Activated CD4-positive, alpha-beta T cell treated with anti-CD3 and anti-CD28 coated beads for 36 hours (primary cell): ENCODE measurements at regions of chr1 and their contacts with region 1.

Region 1: DNA sequence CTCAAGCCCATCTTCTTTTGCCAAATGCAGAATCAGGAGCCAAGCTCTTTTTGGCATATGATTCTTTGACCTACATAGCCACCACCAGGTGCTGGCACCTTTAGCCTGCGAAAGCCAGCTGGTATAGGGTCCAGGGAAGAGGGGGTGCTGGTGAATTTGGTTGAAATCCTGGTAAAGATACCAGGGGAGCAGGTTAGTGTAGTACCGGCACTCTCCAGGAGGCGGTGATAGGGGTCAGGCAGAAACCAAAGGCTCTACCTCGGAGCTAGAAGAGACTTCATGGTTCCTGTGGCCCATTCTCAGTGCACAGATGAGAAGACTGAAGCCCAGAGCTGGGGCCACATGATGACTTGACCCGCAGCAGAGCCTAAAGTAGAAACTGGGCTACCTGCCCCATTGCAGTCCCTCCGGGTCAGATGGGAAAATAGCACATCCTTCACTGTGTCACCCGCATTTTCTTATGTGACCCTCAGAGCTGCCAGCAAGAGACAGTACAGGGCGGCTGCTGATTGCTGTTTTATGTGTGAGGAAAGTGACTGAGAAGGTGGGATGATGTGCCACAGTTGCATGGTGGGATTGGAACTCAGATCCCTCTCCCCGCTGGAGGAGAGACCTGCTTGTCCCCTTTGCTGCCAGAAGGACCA is 36.0 kb upstream of the IL19 start:
- DNase-seq: peak; percentile 89
- ATAC-seq: peak; percentile 52
- H3K4me3 Mint-ChIP-seq: no peak overlapping the region
- H3K27ac Mint-ChIP-seq: no peak overlapping the region
- H3K4me1 Mint-ChIP-seq: peaks cover 55% of the 10 kb centered on the region
- H3K27me3 Mint-ChIP-seq: no peaks in the 10 kb centered on the region

Region 2: DNA sequence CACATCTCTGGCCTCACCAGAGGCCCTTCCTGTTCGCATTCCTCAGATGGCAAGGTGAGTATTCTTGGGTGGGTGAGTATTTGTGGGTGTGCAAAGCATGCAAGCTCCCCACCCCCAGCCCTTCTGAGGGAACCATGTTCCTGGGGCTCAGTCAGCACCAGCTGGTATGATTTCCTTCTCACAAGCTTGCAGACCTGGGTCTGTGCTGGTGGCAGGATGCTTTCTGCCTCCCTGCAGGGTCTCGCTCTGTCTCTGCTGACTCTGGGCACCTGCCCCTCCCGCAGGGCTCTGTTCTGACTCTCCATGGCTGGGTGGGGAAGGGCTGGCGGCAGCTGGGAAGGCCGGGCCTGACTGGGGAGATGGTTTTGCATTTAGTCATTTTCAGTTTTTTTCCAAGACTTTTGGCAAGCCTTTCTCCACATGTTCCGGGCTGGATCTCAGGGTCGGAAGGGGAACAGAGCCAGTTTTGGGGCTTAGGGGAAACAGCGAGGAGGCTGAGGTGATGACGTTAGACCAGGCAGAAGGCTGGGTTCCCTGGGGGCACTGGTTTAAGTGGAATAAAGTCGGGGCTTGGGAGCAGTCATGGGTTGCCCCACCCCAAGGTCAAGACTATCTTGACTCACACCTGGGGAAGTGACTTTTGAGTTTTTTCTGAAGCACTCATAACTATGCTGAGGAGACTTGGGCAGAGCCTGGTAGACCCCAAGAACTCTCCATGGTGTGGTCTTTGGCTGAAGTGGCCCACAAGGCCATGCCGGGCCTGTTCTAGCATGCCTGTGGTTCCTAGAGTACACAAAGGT is 221.1 kb before region 1 on chr1:
- CTCF ChIA-PET with region 1: no interaction called
- POLR2A ChIA-PET with region 1: no interaction called
- intact Hi-C with region 1: no loop called
- DNase-seq: no peak
- ATAC-seq: no peak
- H3K4me3 Mint-ChIP-seq: no peak overlapping the region
- H3K27ac Mint-ChIP-seq: no peak overlapping the region
- H3K4me1 Mint-ChIP-seq: peaks cover 6% of the 10 kb centered on the region
- H3K27me3 Mint-ChIP-seq: peaks cover 21% of the 10 kb centered on the region

Region 3: GRCh38 chr1:206761159-206761768 is 26.6 kb after region 1 on chr1:
- CTCF ChIA-PET with region 1: interaction called, 35 read pairs
- POLR2A ChIA-PET with region 1: no interaction called
- intact Hi-C with region 1: loop called (anchors 2 kb)
- DNase-seq: no peak
- ATAC-seq: no peak
- H3K4me3 Mint-ChIP-seq: no peak overlapping the region
- H3K27ac Mint-ChIP-seq: no peak overlapping the region
- H3K4me1 Mint-ChIP-seq: peaks cover 21% of the 10 kb centered on the region
- H3K27me3 Mint-ChIP-seq: peaks cover 3% of the 10 kb centered on the region

Region 4: DNA sequence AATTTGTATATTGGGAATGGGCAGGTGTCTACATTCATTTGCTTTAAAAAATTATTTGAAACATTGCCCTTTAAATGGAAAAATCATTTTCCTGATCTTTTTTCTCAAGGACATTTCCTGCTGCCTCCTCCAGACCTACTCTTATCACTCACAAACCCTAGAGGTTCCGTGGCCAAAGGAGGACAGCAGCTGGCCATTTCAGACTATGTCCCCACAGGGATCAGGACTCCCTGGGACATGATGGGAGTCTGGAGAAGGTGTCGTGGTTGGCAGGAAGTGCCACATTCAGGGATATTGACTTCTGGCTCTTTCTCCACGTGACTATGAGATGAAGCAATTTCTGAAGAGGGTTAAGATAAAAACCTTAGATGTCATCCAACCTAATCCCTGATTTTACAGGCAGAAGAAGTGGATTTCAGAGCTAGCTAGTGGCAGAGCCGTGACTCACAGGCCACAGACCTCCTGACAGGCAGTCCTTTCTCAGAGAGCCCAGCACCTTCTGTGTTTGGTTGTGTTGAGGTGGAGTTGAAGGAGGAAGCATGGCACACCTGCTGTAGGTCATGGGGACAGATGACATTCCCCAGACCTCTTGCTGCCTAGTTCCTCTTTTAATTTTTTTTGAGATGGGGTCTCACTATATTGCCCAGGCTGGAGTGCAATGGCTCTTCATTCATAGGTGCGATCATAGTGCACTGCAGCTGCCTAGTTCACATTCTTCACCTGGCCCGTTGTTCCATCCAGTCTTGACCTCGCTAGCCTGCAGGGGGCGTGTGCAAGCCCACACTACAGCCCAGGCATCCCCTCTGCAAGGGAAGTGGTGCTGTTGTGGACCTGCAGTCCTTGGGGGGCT is 63.1 kb after region 1 on chr1:
- CTCF ChIA-PET with region 1: interaction called, 198 read pairs
- POLR2A ChIA-PET with region 1: no interaction called
- intact Hi-C with region 1: no loop called
- DNase-seq: peak; percentile 50
- ATAC-seq: peak; percentile 20
- H3K4me3 Mint-ChIP-seq: no peak overlapping the region
- H3K27ac Mint-ChIP-seq: no peak overlapping the region
- H3K4me1 Mint-ChIP-seq: peaks cover 64% of the 10 kb centered on the region
- H3K27me3 Mint-ChIP-seq: peaks cover 19% of the 10 kb centered on the region

Region 5: DNA sequence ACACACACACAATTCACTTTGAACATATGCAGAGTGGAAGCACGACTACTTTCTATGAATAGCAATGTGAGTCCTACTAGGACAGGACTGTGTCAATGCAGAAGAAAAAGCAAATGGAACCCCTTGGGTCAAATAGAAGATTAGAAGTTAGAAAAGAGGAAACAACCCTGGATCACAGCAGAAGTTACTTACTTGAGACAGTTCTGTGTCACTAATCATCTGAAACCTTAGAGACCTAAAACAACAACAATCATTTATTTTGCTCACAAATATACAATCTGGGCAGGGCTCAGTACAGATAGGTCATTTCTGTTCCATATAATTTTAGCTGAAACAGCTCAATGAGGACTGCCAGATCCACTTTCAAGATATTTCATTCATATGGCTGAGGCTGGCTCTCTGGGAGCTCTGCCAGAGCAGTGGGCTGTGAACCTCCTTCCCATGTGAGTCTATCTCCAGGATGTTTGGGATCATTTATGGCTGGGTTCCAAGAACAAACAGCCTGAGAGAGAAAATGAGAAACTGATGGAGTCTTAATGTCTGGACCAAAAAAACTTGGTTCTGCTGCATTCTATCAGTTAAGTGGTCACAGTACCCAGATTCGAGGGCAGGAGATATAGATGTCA is 80.2 kb after region 1 on chr1:
- CTCF ChIA-PET with region 1: interaction called, 198 read pairs
- POLR2A ChIA-PET with region 1: no interaction called
- intact Hi-C with region 1: no loop called
- DNase-seq: no peak
- ATAC-seq: no peak
- H3K4me3 Mint-ChIP-seq: no peak overlapping the region
- H3K27ac Mint-ChIP-seq: no peak overlapping the region
- H3K4me1 Mint-ChIP-seq: peaks cover 26% of the 10 kb centered on the region
- H3K27me3 Mint-ChIP-seq: peaks cover 2% of the 10 kb centered on the region

Region 6: DNA sequence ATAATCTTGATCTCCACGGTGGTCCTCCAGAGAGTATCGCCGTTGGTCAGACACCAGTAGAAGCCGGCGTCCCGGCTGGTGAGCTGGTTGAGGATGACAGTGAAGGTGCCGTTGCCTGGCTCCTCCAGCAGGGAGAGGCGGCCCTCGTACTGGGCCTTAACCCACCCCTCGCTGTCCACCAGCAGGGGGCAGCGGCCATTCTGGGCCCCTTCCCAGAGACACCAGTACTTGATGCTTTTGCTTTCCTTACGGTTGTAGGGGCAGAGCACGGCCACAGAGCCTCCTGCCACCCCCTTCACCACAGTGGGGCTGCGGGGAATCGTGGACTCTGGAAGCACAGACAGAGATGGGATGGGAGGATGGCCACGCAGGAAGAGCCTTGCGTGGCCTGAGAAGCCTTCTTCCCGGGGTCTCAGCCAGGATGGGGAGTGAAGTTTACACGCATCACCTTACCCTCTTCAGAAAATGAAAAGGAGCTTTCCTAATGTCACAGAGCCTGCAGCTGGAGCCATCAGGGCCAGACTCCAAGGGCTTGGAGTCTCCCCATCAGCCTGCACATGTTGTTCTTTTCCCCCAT is 201.0 kb after region 1 on chr1:
- CTCF ChIA-PET with region 1: interaction called, 17 read pairs
- POLR2A ChIA-PET with region 1: interaction called, 3 read pairs
- intact Hi-C with region 1: no loop called
- DNase-seq: peak; percentile 79
- ATAC-seq: peak; percentile 76
- H3K4me3 Mint-ChIP-seq: no peak overlapping the region
- H3K27ac Mint-ChIP-seq: no peak overlapping the region
- H3K4me1 Mint-ChIP-seq: peaks cover 23% of the 10 kb centered on the region
- H3K27me3 Mint-ChIP-seq: no peaks in the 10 kb centered on the region

Region 7: DNA sequence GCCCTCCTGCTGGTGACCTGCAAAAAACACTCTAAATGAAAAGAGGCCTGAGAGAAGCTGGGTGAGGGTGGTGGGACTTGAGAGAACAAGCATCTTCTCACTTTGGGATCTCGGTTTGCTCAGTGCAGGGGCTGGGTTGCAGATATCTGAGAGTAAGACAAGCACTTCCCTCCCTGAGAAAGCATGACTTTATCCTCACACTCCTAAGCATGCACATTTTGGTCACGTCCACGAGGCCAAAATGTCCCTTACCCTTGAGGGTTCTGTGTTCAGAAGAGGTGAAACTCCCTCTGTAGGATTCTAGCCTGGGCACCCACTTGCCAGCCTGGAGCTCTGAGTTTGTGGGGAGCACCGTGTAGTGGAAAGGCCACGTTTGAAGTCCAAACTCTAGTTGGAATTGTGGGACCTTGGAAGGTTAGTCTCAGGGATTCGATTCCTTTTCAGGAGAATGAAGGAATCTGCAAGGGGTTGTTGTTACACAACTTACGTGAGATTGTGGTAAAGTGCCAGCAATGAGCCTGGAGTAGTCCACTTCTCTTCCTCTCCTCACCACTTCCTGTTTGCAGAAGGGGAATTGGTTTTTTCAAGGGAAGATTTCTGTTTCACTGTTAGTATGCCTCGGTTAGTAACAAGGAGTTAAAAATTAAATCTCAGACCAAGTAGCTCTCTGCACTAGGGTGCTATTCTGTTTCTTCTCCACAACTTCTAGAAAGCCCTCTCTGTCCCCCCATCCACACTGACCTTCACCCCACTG is 232.7 kb after region 1 on chr1:
- CTCF ChIA-PET with region 1: no interaction called
- POLR2A ChIA-PET with region 1: no interaction called
- intact Hi-C with region 1: no loop called
- DNase-seq: no peak
- ATAC-seq: peak; percentile 64
- H3K4me3 Mint-ChIP-seq: no peak overlapping the region
- H3K27ac Mint-ChIP-seq: peak overlapping the region; percentile 40
- H3K4me1 Mint-ChIP-seq: peaks cover 32% of the 10 kb centered on the region
- H3K27me3 Mint-ChIP-seq: no peaks in the 10 kb centered on the region